Endothelial cell of umbilical vein (primary cell): ENCODE measurements at regions of chr9 and their contacts with region 1.

Region 1: DNA sequence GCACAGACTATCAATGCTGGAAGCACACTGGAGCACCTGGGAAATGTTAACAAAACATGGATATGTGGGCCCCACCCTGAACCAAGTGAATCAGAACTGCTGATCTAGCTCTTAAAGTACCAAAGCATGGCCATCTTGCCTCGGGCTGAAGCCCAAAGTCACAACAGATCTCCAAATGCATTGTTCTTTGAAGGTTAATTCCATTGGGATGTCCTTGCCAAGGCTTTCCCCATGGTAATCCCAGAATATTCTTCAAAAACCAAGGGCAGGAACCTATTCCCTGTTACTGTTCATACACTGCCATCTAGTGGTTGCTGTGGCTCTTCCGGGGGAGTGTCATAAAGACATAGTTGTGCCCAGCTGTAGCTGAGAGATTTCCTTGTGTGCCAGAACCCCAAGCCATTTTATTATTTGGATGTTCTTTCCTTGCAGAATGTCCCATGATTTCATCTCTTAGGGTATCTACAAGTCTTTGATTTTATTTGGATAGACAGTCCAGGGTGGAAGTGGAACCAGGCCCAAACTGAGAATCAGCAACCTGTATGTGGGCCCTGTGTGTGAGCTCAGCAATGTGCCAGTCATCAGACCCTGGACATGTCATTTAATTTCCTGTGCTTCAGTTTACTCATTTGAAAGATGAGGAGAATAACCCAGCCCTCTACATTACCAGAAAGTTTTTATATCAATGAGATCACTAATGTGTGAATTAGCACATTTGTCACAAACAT is 290.0 kb downstream of the ACTL7B start:
- DNase-seq: peak; percentile 75
- H3K4me3 ChIP-seq: no peak overlapping the region
- H3K27ac ChIP-seq: no peak overlapping the region
- H3K4me1 ChIP-seq: no peaks in the 10 kb centered on the region
- H3K27me3 ChIP-seq: no peaks in the 10 kb centered on the region
- CTCF ChIP-seq: peak; percentile 63 to 81
- POLR2A ChIP-seq: no peak

Region 2: DNA sequence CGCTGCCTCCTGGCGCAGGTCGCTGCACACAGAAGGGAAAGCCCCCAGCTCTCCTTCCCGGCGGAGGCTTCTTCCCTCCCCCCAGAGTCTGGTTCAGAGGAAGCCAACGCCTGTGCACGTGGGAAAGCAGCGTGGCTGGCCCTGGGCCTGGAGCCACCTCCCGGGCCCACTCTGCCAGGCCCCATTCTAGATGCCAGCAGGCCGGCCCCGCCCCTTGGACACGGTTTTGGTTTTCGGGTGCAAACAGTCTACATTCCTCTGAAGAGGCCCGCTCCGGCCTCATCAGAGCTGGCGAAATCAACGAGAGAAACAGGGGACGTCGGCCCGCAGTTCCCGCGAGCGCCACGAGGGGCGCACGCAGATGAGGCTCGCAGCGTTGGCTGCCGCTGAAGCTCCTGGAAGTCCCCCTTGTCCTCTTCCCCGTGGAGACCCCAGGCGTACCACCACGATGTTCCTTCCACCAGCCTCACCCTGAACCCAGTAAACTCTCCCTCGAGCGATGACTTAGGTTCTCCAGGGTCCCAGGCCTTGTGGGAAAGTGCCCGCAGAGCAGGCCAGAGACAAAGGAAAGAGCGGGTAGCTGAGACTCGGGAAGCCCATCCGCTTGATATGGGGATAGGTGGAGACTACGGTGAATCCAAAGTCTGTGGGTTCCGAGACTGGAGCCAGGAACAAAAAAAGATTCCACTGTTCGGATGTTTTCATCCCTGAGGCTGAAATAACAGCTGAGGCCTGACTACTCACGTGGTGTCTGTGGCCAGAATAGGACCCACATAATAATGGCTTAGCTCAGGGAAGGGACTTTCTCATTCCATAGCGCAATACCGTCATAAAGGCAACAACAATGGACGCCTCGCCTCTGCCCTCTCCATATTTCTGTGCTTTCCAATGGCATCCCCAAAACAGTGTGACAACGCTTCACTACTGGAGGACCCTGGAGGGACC is 1140.4 kb before region 1 on chr9:
- CTCF ChIA-PET with region 1: interaction called, 13 read pairs
- POLR2A ChIA-PET with region 1: no interaction called
- dilution Hi-C with region 1: no loop called
- intact Hi-C with region 1: loop called (anchors 1 kb)
- DNase-seq: peak; percentile 65
- H3K4me3 ChIP-seq: peak overlapping the region in 1 of 3 experiments; percentile 12
- H3K27ac ChIP-seq: no peak overlapping the region
- H3K4me1 ChIP-seq: peaks cover 4% of the 10 kb centered on the region
- H3K27me3 ChIP-seq: no peaks in the 10 kb centered on the region
- CTCF ChIP-seq: peak; percentile 98 to 99
- POLR2A ChIP-seq: no peak

Region 3: DNA sequence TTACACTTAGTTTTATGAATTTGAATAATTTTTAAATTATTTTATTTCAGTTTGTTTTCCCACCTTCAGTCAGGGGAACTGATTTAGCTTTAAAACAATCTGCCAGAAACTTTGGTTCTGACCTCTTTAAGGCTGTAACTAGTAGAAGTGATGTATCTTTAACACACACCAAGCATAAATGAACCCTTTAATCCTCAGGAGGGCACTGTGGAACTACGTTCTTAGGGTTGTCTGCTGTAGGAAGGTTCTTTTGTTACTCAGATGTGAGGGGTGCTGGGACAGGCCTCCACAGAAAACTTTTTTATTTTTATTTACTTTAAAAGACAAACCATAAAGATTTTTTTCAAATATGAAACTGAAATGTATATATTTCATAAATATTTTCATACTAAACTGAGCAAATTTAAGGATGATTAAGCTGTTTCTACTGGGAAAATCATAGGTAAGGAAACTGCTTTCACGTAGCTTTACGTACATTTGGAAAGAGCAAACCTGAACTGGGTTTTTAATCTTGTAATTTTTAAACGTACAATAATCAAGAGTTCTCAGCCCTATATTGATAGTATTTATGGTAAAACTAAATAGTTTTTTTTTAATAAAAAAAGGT is 1081.6 kb before region 1 on chr9:
- CTCF ChIA-PET with region 1: interaction called, 48 read pairs
- POLR2A ChIA-PET with region 1: no interaction called
- dilution Hi-C with region 1: no loop called
- intact Hi-C with region 1: loop called (anchors 1 kb)
- DNase-seq: peak; percentile 84
- H3K4me3 ChIP-seq: no peak overlapping the region
- H3K27ac ChIP-seq: no peak overlapping the region
- H3K4me1 ChIP-seq: peaks cover 8% of the 10 kb centered on the region
- H3K27me3 ChIP-seq: peaks cover 3 to 8% of the 10 kb centered on the region in 2 experiments
- CTCF ChIP-seq: peak; percentile 36 to 45
- POLR2A ChIP-seq: no peak

Region 4: DNA sequence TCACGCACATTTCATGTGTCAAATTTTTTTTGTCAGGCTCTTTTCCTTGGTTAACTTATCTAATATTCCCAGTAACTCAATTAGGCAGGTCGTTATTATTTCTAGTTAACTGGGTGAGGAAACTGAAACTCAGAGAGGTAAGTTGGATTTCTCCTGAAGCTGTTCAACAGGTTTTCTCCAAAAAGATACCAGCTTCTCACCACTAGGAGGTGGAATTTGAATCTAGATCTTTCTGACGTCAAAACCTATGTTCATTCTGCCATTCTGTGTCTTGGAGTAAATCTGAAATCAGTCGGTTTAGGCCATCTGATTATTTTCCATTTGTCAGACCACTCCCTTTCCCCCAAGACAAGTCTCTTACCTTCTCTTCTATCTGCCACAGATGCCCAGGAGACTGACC is 282.9 kb before region 1 on chr9:
- CTCF ChIA-PET with region 1: interaction called, 33 read pairs
- POLR2A ChIA-PET with region 1: no interaction called
- dilution Hi-C with region 1: no loop called
- intact Hi-C with region 1: loop called (anchors 1 kb)
- DNase-seq: no peak
- H3K4me3 ChIP-seq: no peak overlapping the region
- H3K27ac ChIP-seq: no peak overlapping the region
- H3K4me1 ChIP-seq: no peaks in the 10 kb centered on the region
- H3K27me3 ChIP-seq: no peaks in the 10 kb centered on the region
- CTCF ChIP-seq: peak in 1 of 2 donors; percentile 27
- POLR2A ChIP-seq: no peak

Region 5: GRCh38 chr9:108416321-108416720 is 149.5 kb before region 1 on chr9:
- CTCF ChIA-PET with region 1: interaction called, 27 read pairs
- POLR2A ChIA-PET with region 1: no interaction called
- dilution Hi-C with region 1: no loop called
- intact Hi-C with region 1: loop called (anchors 2 kb)
- DNase-seq: no peak
- H3K4me3 ChIP-seq: no peak overlapping the region
- H3K27ac ChIP-seq: no peak overlapping the region
- H3K4me1 ChIP-seq: no peaks in the 10 kb centered on the region
- H3K27me3 ChIP-seq: no peaks in the 10 kb centered on the region
- CTCF ChIP-seq: no peak
- POLR2A ChIP-seq: no peak

Region 6: DNA sequence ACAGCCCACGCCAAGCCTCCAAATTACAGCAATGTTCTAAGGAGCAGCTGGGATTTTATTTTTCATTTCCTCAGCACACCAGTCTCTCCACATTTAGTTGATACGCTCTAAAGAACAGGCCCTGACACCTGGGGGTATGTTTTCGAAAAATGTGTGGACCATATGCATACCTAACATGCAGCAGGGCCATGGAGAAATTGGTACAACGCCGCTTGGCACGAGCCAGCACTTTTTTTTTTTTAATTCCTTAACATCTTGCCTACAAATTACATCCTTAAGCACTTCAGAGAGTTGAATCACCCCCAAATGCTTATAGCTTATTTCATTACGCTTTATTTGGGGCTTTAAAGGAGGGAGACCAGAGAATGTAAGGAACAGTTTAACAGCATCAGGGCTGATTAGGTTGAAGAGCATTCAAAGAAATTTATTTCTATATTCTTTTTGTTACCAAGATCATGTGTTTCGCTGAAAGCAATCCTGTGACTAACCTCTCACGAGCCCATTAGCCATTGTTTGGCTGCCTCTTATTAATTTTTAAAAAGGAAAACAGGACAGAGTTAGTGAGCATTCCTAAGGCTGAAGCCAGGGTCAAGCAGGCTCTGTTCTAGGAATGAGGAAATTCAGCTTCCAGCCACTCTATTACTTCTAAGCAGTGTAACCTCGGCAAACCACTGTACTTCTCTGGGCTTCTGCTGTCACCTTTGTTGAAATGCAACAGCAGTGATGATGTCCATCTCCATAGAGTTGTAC is 116.2 kb after region 1 on chr9:
- CTCF ChIA-PET with region 1: no interaction called
- POLR2A ChIA-PET with region 1: no interaction called
- dilution Hi-C with region 1: no loop called
- intact Hi-C with region 1: no loop called
- DNase-seq: no peak
- H3K4me3 ChIP-seq: no peak overlapping the region
- H3K27ac ChIP-seq: no peak overlapping the region
- H3K4me1 ChIP-seq: no peaks in the 10 kb centered on the region
- H3K27me3 ChIP-seq: no peaks in the 10 kb centered on the region
- CTCF ChIP-seq: no peak
- POLR2A ChIP-seq: no peak

Region 7: DNA sequence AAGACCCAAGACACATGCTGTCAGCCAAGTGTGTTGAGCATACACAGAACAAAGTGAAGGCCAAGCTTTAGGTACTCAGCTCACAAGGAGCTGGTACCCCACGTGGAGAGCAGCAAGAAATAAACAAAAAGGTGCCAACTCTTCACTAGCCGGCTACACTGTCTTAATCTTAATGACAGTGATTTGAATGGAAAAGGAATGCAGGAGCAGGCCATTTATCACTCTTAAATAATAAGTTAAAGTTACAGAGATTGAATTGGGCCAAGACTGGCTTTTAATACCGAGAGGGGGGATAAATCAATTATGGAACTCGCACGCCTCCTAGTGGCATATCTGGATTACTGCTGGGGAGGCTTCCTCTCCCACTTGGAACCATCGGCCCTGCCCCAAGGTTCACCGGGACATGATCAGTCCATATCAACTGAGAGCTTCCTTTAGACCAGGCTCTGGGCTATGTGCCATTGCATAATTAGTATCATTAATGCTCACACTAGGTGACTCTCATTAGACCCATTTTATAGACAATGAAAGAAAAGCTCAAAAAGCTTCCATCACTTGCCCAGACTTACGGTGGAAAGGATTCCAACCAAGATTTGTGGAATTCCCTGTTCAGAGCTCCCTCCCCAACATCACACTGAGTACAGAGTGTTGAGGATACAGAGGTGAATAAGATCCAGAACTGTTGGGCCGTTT is 196.0 kb after region 1 on chr9:
- CTCF ChIA-PET with region 1: interaction called, 6 read pairs
- POLR2A ChIA-PET with region 1: no interaction called
- dilution Hi-C with region 1: no loop called
- intact Hi-C with region 1: loop called (anchors 5 kb)
- DNase-seq: peak; percentile 43
- H3K4me3 ChIP-seq: no peak overlapping the region
- H3K27ac ChIP-seq: no peak overlapping the region
- H3K4me1 ChIP-seq: no peaks in the 10 kb centered on the region
- H3K27me3 ChIP-seq: peaks cover 0 to 1% of the 10 kb centered on the region in 2 experiments
- CTCF ChIP-seq: peak; percentile 80 to 81
- POLR2A ChIP-seq: no peak